B cell (primary cell): ENCODE measurements at regions of chr9 and their contacts with region 1.

Region 1: GRCh38 chr9:4604678-4605095 is 57.4 kb upstream of the PLPP6 start:
- DNase-seq: peak; percentile 69
- ATAC-seq: peak; percentile 33
- H3K4me3 ChIP-seq: no peak overlapping the region
- H3K4me3 Mint-ChIP-seq: no peak overlapping the region
- H3K27ac ChIP-seq: no peak overlapping the region
- H3K27ac Mint-ChIP-seq: no peak overlapping the region
- H3K4me1 ChIP-seq: no peaks in the 10 kb centered on the region
- H3K4me1 Mint-ChIP-seq: peaks cover 4% of the 10 kb centered on the region
- H3K27me3 ChIP-seq: peaks cover 0 to 3% (median 0%) of the 10 kb centered on the region in 4 experiments
- H3K27me3 Mint-ChIP-seq: no peaks in the 10 kb centered on the region
- CTCF ChIP-seq: peak; percentile 59

Region 2: DNA sequence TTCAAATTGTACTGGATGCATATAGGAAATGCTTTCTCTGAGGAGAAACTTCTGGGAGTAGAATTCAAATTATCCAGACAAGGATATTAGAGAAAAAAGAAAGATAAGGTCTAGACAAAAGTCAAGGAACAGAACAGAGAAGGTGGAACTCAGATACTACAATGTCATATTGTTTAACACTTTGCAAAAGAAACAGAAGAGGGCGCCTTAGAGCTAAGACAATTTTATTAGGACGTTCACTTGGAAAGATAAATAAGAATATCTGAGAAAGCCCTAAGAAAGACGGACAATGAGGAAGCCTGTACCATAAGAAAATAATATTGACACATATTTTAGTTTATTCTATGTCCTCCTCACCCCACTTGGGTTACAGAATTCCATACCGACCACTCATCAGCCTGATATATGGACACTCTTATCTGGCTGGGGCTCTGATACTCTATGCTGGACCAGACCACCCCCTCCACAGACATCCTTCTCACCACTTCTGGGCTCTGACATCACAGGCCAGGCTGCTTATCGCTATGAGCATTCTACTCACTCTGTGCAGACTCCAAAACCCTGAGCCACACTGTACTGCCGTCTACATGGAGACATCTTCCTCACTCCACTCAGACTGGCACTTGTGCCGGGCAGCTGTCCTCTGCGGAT is 145.5 kb after region 1 on chr9:
- CTCF ChIA-PET with region 1: no interaction called
- POLR2A ChIA-PET with region 1: no interaction called
- intact Hi-C with region 1: loop called (anchors 5 kb)
- DNase-seq: peak; percentile 59
- ATAC-seq: peak; percentile 33
- H3K4me3 ChIP-seq: no peak overlapping the region
- H3K4me3 Mint-ChIP-seq: no peak overlapping the region
- H3K27ac ChIP-seq: no peak overlapping the region
- H3K27ac Mint-ChIP-seq: no peak overlapping the region
- H3K4me1 ChIP-seq: no peaks in the 10 kb centered on the region
- H3K4me1 Mint-ChIP-seq: no peaks in the 10 kb centered on the region
- H3K27me3 ChIP-seq: no peaks in the 10 kb centered on the region
- H3K27me3 Mint-ChIP-seq: no peaks in the 10 kb centered on the region
- CTCF ChIP-seq: peak; percentile 77

Region 3: GRCh38 chr9:4792572-4793458 is 188.1 kb after region 1 on chr9 and contains the start of gene RCL1:
- CTCF ChIA-PET with region 1: no interaction called
- POLR2A ChIA-PET with region 1: no interaction called
- intact Hi-C with region 1: no loop called
- DNase-seq: peak; percentile 97
- ATAC-seq: peak; percentile 91
- H3K4me3 ChIP-seq: peak within 1 kb of the TSS; percentile 81 to 96 (median 94)
- H3K4me3 Mint-ChIP-seq: peak within 1 kb of the TSS; percentile 98
- H3K27ac ChIP-seq: peak within 1 kb of the TSS; percentile 89 to 97
- H3K27ac Mint-ChIP-seq: peak within 1 kb of the TSS; percentile 97
- H3K4me1 ChIP-seq: peaks cover 22 to 30% of the 10 kb centered on the region in 2 donors
- H3K4me1 Mint-ChIP-seq: peaks cover 36% of the 10 kb centered on the region
- H3K27me3 ChIP-seq: no peaks in the 10 kb centered on the region
- H3K27me3 Mint-ChIP-seq: peaks cover 1% of the 10 kb centered on the region
- CTCF ChIP-seq: no peak
- total RNA-seq, gene RCL1: 21.7 and 29.6 TPM in 2 replicates

Region 4: DNA sequence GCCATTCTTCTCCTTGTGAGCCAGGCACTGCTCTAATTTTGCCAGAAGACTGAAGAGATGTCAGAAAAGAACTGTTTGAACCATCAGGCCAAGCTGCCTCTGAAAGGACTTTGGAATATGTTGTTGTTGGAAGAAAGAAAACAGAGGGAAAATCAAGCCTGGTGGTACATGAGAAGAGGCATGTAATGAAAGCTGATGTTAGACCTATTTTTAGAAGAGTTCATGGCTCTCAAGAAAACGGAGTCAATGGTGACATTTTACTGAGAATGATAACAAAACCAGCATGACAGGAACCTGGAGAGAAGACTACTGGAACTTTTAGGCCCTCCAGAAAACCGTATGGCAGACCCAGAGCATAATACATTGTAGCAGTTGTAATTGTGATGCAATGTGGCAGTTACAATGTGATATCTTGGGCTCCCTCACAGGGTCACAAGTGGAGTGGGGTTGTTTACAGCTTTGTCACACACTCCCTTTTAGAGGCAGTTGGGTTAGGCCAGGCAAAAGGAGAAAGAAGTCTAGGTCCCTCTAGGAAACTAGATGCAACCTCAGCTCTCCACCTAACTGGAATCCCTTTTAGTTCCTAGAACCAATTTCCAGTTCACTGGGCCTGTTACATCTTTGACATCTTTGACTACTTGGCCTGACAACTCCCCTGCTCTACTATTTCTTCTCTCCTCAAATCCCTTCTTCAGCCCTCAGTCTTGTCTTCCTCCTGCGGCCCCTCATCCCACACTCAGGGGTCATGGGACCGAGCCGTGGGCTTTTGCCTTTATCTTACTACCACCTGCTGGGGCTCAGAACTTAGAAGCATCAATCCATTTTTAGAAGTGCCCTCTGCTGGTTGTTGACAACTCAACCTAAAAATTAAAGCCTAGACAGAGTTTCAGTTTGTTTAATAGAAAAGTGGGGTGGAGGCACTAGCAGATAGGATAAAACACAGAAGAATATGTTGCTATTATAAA is 319.2 kb after region 1 on chr9:
- CTCF ChIA-PET with region 1: interaction called, 5 read pairs
- POLR2A ChIA-PET with region 1: no interaction called
- intact Hi-C with region 1: loop called (anchors 2 kb)
- DNase-seq: peak; percentile 63
- ATAC-seq: peak; percentile 60
- H3K4me3 ChIP-seq: no peak overlapping the region
- H3K4me3 Mint-ChIP-seq: no peak overlapping the region
- H3K27ac ChIP-seq: no peak overlapping the region
- H3K27ac Mint-ChIP-seq: no peak overlapping the region
- H3K4me1 ChIP-seq: peaks cover 6 to 8% of the 10 kb centered on the region in 2 donors
- H3K4me1 Mint-ChIP-seq: peaks cover 9% of the 10 kb centered on the region
- H3K27me3 ChIP-seq: no peaks in the 10 kb centered on the region
- H3K27me3 Mint-ChIP-seq: no peaks in the 10 kb centered on the region
- CTCF ChIP-seq: peak; percentile 42